H1 (cell line): ENCODE measurements at regions of chr14 and their contacts with region 1.

Region 1: GRCh38 chr14:66746316-66747006 is 238.5 kb downstream of the GPHN start:
- DNase-seq: no peak
- H3K4me3 ChIP-seq: no peak overlapping the region
- H3K27ac ChIP-seq: no peak overlapping the region
- H3K4me1 ChIP-seq: no peaks in the 10 kb centered on the region
- H3K27me3 ChIP-seq: no peaks in the 10 kb centered on the region
- CTCF ChIP-seq: peak in 2 of 3 experiments; percentile 33 to 56; a peak in 2 of 4 replicates
- EP300 ChIP-seq: no peak
- POLR2A ChIP-seq: no peak
- RAD21 ChIP-seq: peak; percentile 43 to 44

Region 2: GRCh38 chr14:66681180-66681579 is 65.3 kb before region 1 on chr14:
- CTCF ChIA-PET with region 1: no interaction called
- POLR2A ChIA-PET with region 1: no interaction called
- DNase-seq: no peak
- H3K4me3 ChIP-seq: no peak overlapping the region
- H3K27ac ChIP-seq: no peak overlapping the region
- H3K4me1 ChIP-seq: no peaks in the 10 kb centered on the region
- H3K27me3 ChIP-seq: no peaks in the 10 kb centered on the region
- CTCF ChIP-seq: no peak
- EP300 ChIP-seq: no peak
- POLR2A ChIP-seq: no peak
- RAD21 ChIP-seq: no peak

Region 3: GRCh38 chr14:66735853-66736252 is 10.6 kb before region 1 on chr14:
- CTCF ChIA-PET with region 1: interaction called, 11 read pairs
- POLR2A ChIA-PET with region 1: no interaction called
- DNase-seq: no peak
- H3K4me3 ChIP-seq: no peak overlapping the region
- H3K27ac ChIP-seq: no peak overlapping the region
- H3K4me1 ChIP-seq: no peaks in the 10 kb centered on the region
- H3K27me3 ChIP-seq: no peaks in the 10 kb centered on the region
- CTCF ChIP-seq: no peak
- EP300 ChIP-seq: no peak
- POLR2A ChIP-seq: no peak
- RAD21 ChIP-seq: no peak